ENCODE measurements at regions of chr12 and their contacts with region 1.

Region 1: DNA sequence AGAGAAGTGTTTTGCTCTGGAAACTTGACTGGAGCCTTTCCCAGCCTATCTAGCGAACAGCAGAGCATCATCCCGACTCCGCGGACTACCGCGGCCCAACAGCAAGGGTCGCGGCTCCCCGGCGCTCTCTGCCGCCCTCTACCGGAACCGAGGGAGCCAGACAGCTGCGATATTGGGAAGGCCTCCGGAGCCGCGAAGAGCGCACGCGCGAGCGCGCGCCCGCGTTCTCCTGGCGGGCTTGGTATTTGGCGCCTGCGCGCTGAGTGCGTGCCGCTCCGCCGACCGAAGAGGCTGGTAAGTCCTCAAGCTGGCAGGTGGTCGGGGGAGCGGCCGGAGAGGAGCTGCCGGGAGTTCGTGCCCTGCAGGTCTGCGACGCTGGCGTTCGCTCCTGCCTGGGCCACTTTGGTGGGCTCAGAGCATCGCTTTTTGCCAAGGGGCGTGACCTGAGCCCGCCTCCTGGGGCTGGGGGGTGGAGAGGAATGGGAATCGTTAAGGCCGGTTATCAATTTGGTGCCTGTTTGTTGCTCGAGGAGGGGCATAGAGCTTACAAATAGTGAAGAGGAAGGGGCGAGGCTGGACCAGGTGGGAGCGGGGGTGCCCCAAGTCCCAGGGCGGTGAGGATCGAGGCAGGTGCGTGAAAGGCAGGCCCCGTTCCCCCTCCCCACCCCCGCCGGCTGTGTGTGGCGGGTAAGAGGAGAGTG is at the start of gene TMEM106C:
- DNase-seq: peak; percentile 91 to 97
- ATAC-seq: peak; percentile 92 to 98
- H3K4me3 ChIP-seq: peak within 1 kb of the TSS; percentile 91
- H3K27ac ChIP-seq: peak within 1 kb of the TSS; percentile 85 to 91
- H3K4me1 ChIP-seq: peaks cover 4% of the 10 kb centered on the region; the same call in 1 of the 3 replicates
- CTCF ChIP-seq: peak; percentile 92
- EP300 ChIP-seq: no peak
- POLR2A ChIP-seq: peak; percentile 60
- RAD21 ChIP-seq: peak; percentile 60 to 62; a peak in 4 of 5 replicates
- polyA plus RNA-seq, gene TMEM106C: 236 and 331 TPM in 2 replicates

Region 2: DNA sequence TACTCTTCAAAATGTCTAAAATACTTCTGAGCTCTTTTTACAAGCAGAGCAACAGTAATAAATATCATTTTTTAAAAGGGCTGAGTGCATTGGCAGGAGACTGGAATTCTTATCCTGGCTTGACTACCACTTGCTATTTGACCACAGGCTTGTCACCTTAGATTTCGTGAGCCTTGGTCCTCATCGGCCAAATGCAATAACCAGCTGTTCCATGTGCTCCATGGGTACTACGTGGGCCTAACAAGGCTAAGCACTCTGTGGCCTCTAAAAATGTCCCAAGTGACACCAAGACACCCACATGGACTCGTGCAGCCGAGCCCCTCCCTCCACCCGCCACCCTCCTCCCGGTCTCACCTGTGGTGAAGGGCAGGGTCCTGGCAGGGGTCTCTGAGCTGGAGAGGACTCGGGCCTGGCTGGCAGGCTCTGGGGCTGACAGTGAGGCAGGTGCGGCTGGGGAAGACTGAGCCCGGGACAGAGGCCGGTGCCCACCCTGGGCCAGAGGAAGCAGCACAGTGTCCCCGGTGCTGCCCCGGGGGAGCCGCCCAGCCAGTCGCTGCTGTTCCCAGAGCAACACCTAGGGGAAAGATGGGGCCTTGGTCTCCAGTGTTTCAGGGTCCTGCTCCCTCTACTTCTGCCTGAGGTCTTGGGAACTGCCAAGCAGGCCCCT is 170.3 kb before region 1 on chr12:
- CTCF ChIA-PET with region 1: no interaction called
- POLR2A ChIA-PET with region 1: no interaction called
- DNase-seq: no peak
- ATAC-seq: no peak
- H3K4me3 ChIP-seq: no peak overlapping the region
- H3K27ac ChIP-seq: no peak overlapping the region
- H3K4me1 ChIP-seq: no peaks in the 10 kb centered on the region
- CTCF ChIP-seq: no peak
- EP300 ChIP-seq: no peak
- POLR2A ChIP-seq: no peak
- RAD21 ChIP-seq: no peak

Region 3: DNA sequence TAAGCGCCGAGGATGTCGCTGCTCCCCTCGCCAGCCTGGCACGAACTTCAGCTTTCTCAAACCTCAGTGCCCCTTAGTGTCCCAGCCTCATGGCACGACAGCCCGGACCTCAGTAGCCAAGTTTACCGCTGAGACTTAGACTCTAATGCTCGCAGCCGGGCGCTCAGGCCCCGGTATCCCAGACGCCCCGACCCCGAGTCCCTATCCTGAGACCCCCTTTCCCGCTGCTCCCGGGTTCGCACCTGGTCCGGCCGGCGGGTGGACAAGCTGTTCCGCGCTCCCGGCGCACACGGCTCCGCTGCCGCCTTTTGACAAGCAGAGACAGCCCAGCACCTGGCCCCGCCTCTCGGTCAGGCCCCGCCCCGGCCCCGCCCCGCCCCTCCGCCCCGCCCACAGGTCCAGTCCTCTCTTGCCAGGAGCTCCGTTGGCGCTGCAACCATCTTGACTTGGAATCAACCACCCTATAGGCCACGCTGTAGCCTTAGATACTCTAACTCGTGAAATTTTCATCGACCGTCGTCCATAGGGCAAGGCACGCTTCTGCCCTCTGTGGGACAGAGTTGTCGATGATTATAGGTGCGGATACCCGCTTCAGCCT is 58.7 kb before region 1 on chr12 and contains the start of gene VDR:
- CTCF ChIA-PET with region 1: interaction called, 10 read pairs
- POLR2A ChIA-PET with region 1: interaction called, 3 read pairs
- DNase-seq: peak; percentile 87 to 89
- ATAC-seq: peak; percentile 83 to 88
- H3K4me3 ChIP-seq: peak within 1 kb of the TSS; percentile 59
- H3K27ac ChIP-seq: peak within 1 kb of the TSS; percentile 67 to 78; a peak in 5 of 6 replicates
- H3K4me1 ChIP-seq: peaks cover 19% of the 10 kb centered on the region
- CTCF ChIP-seq: no peak; the same call in 2 of the 3 replicates
- EP300 ChIP-seq: no peak
- POLR2A ChIP-seq: peak; percentile 21; the same call in 1 of the 2 replicates
- RAD21 ChIP-seq: no peak
- polyA plus RNA-seq, gene VDR: 2.1 and 2.2 TPM in 2 replicates

Region 4: GRCh38 chr12:47977046-47977766 is 13.7 kb after region 1 on chr12:
- CTCF ChIA-PET with region 1: interaction called, 10 read pairs
- POLR2A ChIA-PET with region 1: no interaction called
- DNase-seq: no peak
- ATAC-seq: no peak
- H3K4me3 ChIP-seq: no peak overlapping the region
- H3K27ac ChIP-seq: no peak overlapping the region
- H3K4me1 ChIP-seq: no peaks in the 10 kb centered on the region
- CTCF ChIP-seq: no peak
- EP300 ChIP-seq: no peak
- POLR2A ChIP-seq: no peak
- RAD21 ChIP-seq: no peak

Region 5: DNA sequence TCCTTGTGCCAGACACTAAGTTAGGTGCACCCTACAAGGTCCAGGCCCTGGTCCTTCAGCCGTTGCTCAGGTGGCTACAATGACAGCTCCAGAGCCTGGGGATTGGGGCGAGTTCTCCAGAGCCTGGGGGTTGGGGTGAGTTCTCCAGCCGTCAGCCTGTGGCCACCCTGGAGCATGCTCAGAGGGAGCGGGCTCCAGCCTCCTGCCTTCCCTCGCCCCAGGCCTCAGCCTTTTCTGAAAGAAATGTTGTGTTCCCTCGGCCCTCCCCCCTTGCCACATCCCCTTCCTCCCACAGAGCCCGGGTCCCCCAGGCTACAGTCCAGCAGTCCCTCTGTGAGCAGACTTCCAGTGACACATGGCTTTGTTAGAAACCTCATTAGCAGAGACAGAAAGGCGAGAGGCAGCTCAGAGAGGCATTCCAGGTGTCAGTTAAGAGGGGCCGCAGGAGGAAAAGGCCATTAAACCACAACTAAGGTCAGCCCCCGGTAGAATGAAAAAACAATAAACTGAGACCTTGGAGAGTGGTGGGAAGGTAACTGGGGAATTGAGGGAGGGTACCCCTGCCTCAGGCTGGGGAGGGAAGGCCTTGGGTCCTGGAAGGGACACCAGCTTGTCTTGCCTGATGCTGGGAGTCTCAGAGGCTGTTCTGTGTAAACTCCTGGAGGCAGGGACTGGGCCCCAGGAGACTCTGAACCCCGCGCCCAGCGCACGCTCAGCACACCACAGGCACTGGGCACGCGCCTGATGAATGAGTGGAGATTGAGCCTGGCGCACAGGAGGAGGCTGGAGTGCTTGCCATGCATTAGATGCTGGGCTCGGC is 63.9 kb after region 1 on chr12:
- CTCF ChIA-PET with region 1: no interaction called
- POLR2A ChIA-PET with region 1: no interaction called
- DNase-seq: no peak
- ATAC-seq: no peak
- H3K4me3 ChIP-seq: no peak overlapping the region
- H3K27ac ChIP-seq: no peak overlapping the region
- H3K4me1 ChIP-seq: no peaks in the 10 kb centered on the region
- CTCF ChIP-seq: no peak
- EP300 ChIP-seq: no peak
- POLR2A ChIP-seq: no peak
- RAD21 ChIP-seq: no peak